ENCODE measurements at regions of chr3 and their contacts with region 1.

Region 1: GRCh38 chr3:168847291-168847883 is 751.7 kb upstream of the GOLIM4 start:
- DNase-seq: no peak
- H3K4me3 ChIP-seq: no peak overlapping the region
- H3K27ac ChIP-seq: no peak overlapping the region
- H3K4me1 ChIP-seq: peaks cover 0 to 6% (median 0%) of the 10 kb centered on the region in 4 donors
- H3K27me3 ChIP-seq: no peaks in the 10 kb centered on the region
- CTCF ChIP-seq: peak; percentile 48 to 55 (median 52)
- EP300 ChIP-seq: no peak
- POLR2A ChIP-seq: no peak

Region 2: GRCh38 chr3:168511428-168512014 is 335.9 kb before region 1 on chr3:
- intact Hi-C with region 1: loop called (anchors 5 kb)
- DNase-seq: no peak
- H3K4me3 ChIP-seq: no peak overlapping the region
- H3K27ac ChIP-seq: no peak overlapping the region
- H3K4me1 ChIP-seq: no peaks in the 10 kb centered on the region
- H3K27me3 ChIP-seq: no peaks in the 10 kb centered on the region
- CTCF ChIP-seq: peak in 2 of 3 experiments; percentile 47 to 54
- EP300 ChIP-seq: no peak
- POLR2A ChIP-seq: no peak

Measured in esophagus muscularis mucosa (tissue), 4 donors.